PC-9 (cell line): ENCODE measurements at regions of chr1 and their contacts with region 1.

Region 1: GRCh38 chr1:89945852-89946476 is 48.9 kb upstream of the ZNF326 start:
- DNase-seq: peak in 1 of 2 experiments; percentile 62
- H3K4me3 ChIP-seq: no peak overlapping the region
- H3K27ac ChIP-seq: peak overlapping the region; percentile 6; the same call in 1 of the 2 replicates
- H3K4me1 ChIP-seq: peaks cover 48% of the 10 kb centered on the region
- H3K27me3 ChIP-seq: no peaks in the 10 kb centered on the region
- CTCF ChIP-seq: no peak

Region 2: GRCh38 chr1:89022167-89022959 is 923.6 kb before region 1 on chr1 and contains the start of gene GBP3:
- CTCF ChIA-PET with region 1: no interaction called
- POLR2A ChIA-PET with region 1: interaction called, 20 read pairs
- intact Hi-C with region 1: no loop called
- DNase-seq: peak in 1 of 2 experiments; percentile 82
- H3K4me3 ChIP-seq: peak within 1 kb of the TSS; percentile 57
- H3K27ac ChIP-seq: peak within 1 kb of the TSS; percentile 78
- H3K4me1 ChIP-seq: peaks cover 41% of the 10 kb centered on the region
- H3K27me3 ChIP-seq: no peaks in the 10 kb centered on the region
- CTCF ChIP-seq: no peak
- total RNA-seq, gene GBP3: 17.7 and 22.6 TPM in 2 replicates

Region 3: GRCh38 chr1:89657886-89658285 is 288.1 kb before region 1 on chr1:
- CTCF ChIA-PET with region 1: interaction called, 14 read pairs
- POLR2A ChIA-PET with region 1: no interaction called
- intact Hi-C with region 1: no loop called
- DNase-seq: no peak
- H3K4me3 ChIP-seq: no peak overlapping the region
- H3K27ac ChIP-seq: no peak overlapping the region
- H3K4me1 ChIP-seq: no peaks in the 10 kb centered on the region
- H3K27me3 ChIP-seq: no peaks in the 10 kb centered on the region
- CTCF ChIP-seq: no peak

Region 4: GRCh38 chr1:89962024-89962741 is 16.2 kb after region 1 on chr1:
- CTCF ChIA-PET with region 1: no interaction called
- POLR2A ChIA-PET with region 1: no interaction called
- intact Hi-C with region 1: no loop called
- DNase-seq: no peak
- H3K4me3 ChIP-seq: no peak overlapping the region
- H3K27ac ChIP-seq: no peak overlapping the region
- H3K4me1 ChIP-seq: peaks cover 9% of the 10 kb centered on the region
- H3K27me3 ChIP-seq: no peaks in the 10 kb centered on the region
- CTCF ChIP-seq: no peak

Region 5: DNA sequence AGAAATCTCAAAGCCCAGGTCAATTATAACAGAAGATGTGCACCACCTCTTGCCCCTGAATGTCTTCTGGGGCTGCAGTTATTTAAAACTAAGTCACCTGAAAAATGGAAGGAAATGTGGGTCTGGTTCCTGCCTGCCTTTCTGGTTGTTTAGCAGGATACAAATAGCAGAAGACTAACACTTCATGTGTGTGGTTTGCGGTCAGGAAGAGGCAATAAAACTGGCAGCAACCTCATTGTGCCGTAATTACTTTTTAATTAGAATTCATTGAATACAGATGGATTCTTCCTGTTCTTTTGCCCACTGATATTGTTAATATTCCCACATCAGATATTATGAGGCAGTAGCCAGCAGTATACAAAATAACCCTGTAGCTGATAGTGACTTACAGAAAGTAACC is 394.6 kb after region 1 on chr1:
- CTCF ChIA-PET with region 1: no interaction called
- POLR2A ChIA-PET with region 1: no interaction called
- intact Hi-C with region 1: no loop called
- DNase-seq: no peak
- H3K4me3 ChIP-seq: no peak overlapping the region
- H3K27ac ChIP-seq: no peak overlapping the region
- H3K4me1 ChIP-seq: no peaks in the 10 kb centered on the region
- H3K27me3 ChIP-seq: no peaks in the 10 kb centered on the region
- CTCF ChIP-seq: no peak